CD8-positive, alpha-beta T cell (primary cell): ENCODE measurements at regions of chr14 and their contacts with region 1.

Region 1: DNA sequence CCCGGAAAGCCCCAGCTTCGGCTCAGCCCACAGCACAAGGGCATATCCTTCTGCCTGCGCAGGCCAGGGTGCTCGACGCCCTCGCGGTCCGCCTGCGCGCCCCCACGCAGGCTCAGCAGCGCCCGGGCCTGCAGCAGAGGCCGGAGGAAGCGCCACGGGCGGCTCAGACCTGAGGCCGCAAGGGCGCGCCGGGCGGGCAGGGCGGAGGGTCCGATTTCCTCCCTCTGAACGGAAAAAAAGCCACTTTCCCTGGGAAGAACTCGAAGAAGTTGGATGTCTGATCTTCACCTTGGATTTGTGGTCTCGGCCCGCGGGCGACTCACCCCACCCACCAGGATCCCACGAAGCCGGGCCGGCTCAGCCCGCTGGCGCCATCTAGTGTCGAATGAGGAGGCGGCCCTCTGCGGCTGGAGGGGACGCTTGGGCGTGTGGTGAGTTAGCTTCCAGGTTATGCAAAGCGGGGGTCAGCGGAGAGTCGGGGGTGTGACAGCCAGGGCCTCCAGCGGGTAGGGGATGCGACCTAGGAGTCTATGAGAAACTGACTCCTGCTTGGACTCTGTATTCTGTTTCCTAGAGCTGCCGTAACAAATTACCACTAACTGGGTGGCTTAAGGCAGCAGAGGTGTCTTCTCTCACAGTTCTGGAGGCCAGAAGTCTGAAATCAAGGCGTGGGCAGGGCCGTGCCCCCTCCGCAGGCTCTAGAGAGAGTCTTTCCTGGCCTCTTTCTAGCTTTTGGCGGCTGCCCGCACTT is 40.0 kb upstream of the SRSF5 start:
- DNase-seq: peak; percentile 68 to 93 (median 84)
- ATAC-seq: peak; percentile 85
- H3K4me3 ChIP-seq: peak overlapping the region; percentile 48 to 60
- H3K4me3 Mint-ChIP-seq: peak overlapping the region; percentile 73
- H3K27ac ChIP-seq: peak overlapping the region in 1 of 2 experiments; percentile 50
- H3K27ac Mint-ChIP-seq: peak overlapping the region; percentile 76
- H3K4me1 ChIP-seq: peaks cover 12% of the 10 kb centered on the region
- H3K4me1 Mint-ChIP-seq: peaks cover 6% of the 10 kb centered on the region
- H3K27me3 ChIP-seq: no peaks in the 10 kb centered on the region
- H3K27me3 Mint-ChIP-seq: no peaks in the 10 kb centered on the region
- CTCF ChIP-seq: peak; percentile 95

Region 2: DNA sequence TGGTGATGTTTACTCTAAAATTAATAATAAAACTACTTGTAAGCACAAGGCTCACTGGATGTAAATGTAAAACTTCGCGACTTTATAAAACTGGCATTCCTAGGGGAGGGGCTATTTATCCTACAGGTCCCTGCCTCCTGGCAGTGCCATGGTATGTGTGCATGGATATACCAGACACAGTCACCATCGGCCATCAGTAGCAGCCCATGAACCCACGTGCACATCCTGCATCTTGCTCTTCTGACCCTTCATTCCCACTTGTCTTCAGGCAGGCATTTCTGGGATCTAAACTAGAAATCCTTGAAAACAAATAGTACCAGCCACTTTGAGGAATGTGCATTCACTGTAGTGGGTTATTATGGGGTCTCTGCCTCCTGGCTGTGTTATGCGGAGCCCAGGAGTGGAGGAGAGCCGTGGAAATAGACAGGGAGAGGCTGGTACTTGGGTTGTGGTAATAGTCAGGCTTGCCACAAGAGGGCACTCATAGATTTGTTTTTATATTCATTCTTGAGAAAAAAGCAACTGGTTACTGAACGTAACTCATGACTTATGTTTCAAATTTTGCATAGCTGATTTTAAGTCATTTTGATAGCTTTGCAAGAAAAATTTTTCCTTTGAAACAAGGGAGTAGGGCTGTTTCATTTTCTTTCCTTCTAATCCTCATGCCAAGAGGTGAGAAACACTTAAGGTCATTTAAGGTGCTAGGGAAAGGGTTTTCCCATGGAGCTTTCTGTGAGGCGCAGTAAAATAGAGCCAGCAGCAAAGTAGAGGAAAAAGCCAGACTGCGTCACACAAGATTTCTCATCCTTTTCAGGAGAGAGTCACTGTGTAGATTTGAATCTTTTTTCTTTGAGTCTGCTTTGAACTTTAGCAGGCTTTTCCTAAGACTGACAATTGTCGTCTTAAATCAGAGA is 484.4 kb before region 1 on chr14:
- CTCF ChIA-PET with region 1: no interaction called
- POLR2A ChIA-PET with region 1: no interaction called
- intact Hi-C with region 1: loop called in 1 of 2 experiments (anchors 10 kb)
- DNase-seq: peak; percentile 15 to 71 (median 47)
- ATAC-seq: peak; percentile 69
- H3K4me3 ChIP-seq: no peak overlapping the region
- H3K4me3 Mint-ChIP-seq: no peak overlapping the region
- H3K27ac ChIP-seq: no peak overlapping the region
- H3K27ac Mint-ChIP-seq: no peak overlapping the region
- H3K4me1 ChIP-seq: no peaks in the 10 kb centered on the region
- H3K4me1 Mint-ChIP-seq: peaks cover 3% of the 10 kb centered on the region
- H3K27me3 ChIP-seq: no peaks in the 10 kb centered on the region
- H3K27me3 Mint-ChIP-seq: no peaks in the 10 kb centered on the region
- CTCF ChIP-seq: peak; percentile 86

Region 3: GRCh38 chr14:69580009-69580577 is 146.8 kb before region 1 on chr14:
- CTCF ChIA-PET with region 1: interaction called, 71 read pairs
- POLR2A ChIA-PET with region 1: no interaction called
- intact Hi-C with region 1: loop called (anchors 1 kb)
- DNase-seq: peak in 2 of 9 experiments; percentile 10 to 17
- ATAC-seq: no peak
- H3K4me3 ChIP-seq: no peak overlapping the region
- H3K4me3 Mint-ChIP-seq: no peak overlapping the region
- H3K27ac ChIP-seq: no peak overlapping the region
- H3K27ac Mint-ChIP-seq: no peak overlapping the region
- H3K4me1 ChIP-seq: no peaks in the 10 kb centered on the region
- H3K4me1 Mint-ChIP-seq: no peaks in the 10 kb centered on the region
- H3K27me3 ChIP-seq: peaks cover 4 to 6% of the 10 kb centered on the region in 2 experiments
- H3K27me3 Mint-ChIP-seq: peaks cover 18% of the 10 kb centered on the region
- CTCF ChIP-seq: no peak

Region 4: GRCh38 chr14:69593018-69593677 is 133.8 kb before region 1 on chr14:
- CTCF ChIA-PET with region 1: interaction called, 167 read pairs
- POLR2A ChIA-PET with region 1: no interaction called
- intact Hi-C with region 1: no loop called
- DNase-seq: no peak
- ATAC-seq: no peak
- H3K4me3 ChIP-seq: no peak overlapping the region
- H3K4me3 Mint-ChIP-seq: no peak overlapping the region
- H3K27ac ChIP-seq: no peak overlapping the region
- H3K27ac Mint-ChIP-seq: no peak overlapping the region
- H3K4me1 ChIP-seq: no peaks in the 10 kb centered on the region
- H3K4me1 Mint-ChIP-seq: no peaks in the 10 kb centered on the region
- H3K27me3 ChIP-seq: no peaks in the 10 kb centered on the region
- H3K27me3 Mint-ChIP-seq: no peaks in the 10 kb centered on the region
- CTCF ChIP-seq: no peak

Region 5: GRCh38 chr14:69715725-69716477 is 11.0 kb before region 1 on chr14:
- CTCF ChIA-PET with region 1: interaction called, 10 read pairs
- POLR2A ChIA-PET with region 1: no interaction called
- intact Hi-C with region 1: no loop called
- DNase-seq: peak in 3 of 9 experiments; percentile 19 to 63 (median 51)
- ATAC-seq: peak; percentile 29
- H3K4me3 ChIP-seq: no peak overlapping the region
- H3K4me3 Mint-ChIP-seq: no peak overlapping the region
- H3K27ac ChIP-seq: peak overlapping the region in 1 of 2 experiments; percentile 84
- H3K27ac Mint-ChIP-seq: peak overlapping the region; percentile 69
- H3K4me1 ChIP-seq: peaks cover 24% of the 10 kb centered on the region
- H3K4me1 Mint-ChIP-seq: peaks cover 33% of the 10 kb centered on the region
- H3K27me3 ChIP-seq: no peaks in the 10 kb centered on the region
- H3K27me3 Mint-ChIP-seq: no peaks in the 10 kb centered on the region
- CTCF ChIP-seq: no peak

Region 6: DNA sequence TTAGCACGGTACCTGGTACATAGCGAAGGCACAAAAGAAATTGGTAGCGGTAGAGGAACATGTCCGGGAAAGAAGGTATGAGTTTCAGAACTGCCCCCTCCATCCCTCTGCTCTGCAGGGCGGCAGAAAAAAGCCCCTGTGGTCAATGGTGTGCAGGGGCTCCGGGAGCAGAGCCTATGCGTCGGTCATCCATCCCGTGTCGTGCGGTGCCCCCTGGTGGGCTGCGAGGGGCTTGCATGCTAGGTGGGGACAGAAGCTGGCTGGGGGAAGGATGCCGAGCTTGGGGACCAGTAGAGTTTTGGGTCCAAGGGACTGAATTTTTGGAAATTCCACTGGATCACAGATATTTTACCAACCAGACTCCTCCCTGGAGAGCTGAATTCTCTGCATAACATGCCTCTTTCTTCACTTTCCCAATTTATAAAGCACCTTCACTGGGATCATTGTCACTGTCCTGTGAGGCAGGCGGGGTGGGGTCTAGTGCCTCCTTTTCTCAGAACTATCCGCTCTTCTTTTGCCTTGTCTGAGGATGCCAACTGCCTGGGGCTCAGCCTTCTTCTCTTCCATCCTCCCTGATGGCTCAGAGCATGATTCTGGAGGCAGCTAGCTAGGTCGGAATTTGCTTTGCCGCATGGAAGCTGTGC is 301.0 kb after region 1 on chr14:
- CTCF ChIA-PET with region 1: interaction called, 6 read pairs
- POLR2A ChIA-PET with region 1: no interaction called
- intact Hi-C with region 1: loop called in 1 of 2 experiments (anchors 5 kb)
- DNase-seq: peak; percentile 14 to 67 (median 55)
- ATAC-seq: peak; percentile 42
- H3K4me3 ChIP-seq: no peak overlapping the region
- H3K4me3 Mint-ChIP-seq: no peak overlapping the region
- H3K27ac ChIP-seq: no peak overlapping the region
- H3K27ac Mint-ChIP-seq: no peak overlapping the region
- H3K4me1 ChIP-seq: no peaks in the 10 kb centered on the region
- H3K4me1 Mint-ChIP-seq: peaks cover 2% of the 10 kb centered on the region
- H3K27me3 ChIP-seq: no peaks in the 10 kb centered on the region
- H3K27me3 Mint-ChIP-seq: peaks cover 6% of the 10 kb centered on the region
- CTCF ChIP-seq: peak; percentile 49